AG04449 (cell line): ENCODE measurements at regions of chr7 and their contacts with region 1.

Region 1: DNA sequence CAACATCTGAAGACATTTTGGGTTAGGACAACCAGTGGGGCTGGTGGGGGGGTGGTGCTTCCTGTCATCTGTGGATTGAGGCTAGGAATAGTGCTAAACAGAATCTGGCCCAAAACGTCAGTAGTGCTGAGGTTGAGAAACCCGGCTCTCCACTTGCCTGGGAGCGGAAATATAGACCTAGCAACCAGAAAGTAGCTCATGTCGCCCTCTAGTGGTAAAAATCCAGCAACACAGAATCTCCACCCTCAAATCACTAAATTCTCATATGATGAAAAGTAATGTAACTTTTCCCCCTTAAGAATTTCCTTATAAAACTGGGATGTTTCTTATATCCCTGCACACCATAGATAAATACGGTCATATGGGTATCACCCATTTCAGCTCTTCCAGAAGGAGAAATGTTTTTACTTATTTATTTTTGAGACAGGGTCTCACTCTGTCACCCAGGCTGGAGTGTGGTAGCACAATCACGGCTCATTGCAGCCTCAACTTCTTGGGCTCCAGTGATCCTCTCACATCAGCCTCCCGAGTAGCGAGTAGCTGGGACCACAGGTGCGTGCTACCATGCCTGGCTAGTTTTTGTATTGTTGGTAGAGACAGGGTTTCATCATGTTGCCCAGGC is 34.4 kb downstream of the ZC3HAV1 start:
- DNase-seq: peak; percentile 31
- H3K4me3 ChIP-seq: no peak overlapping the region
- CTCF ChIP-seq: peak; percentile 55

Region 2: DNA sequence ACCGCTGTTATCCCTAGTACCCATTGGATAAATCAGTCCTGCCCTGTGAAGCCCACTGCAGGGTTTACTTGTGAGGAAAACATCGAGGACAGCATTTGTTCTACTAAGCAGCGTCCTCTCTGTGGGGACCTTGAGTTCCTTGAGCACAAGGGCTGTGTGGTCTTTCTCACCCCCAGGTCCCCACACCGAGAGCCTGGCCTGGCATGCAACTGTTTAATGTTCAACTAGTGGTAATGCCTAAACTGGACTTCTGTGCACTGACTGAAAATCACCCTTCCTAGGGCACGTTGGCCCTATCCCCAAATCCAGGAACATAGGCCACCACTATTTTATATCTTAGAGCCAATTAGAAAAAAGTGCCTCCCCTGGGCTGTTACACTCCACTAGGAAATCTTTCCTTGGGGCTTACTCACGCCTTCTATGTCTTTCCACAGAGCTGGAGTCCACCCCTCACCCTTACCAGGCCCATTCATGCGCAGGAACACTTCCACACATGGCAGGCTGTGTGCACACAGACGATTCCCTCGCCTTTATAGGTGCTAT is 279.0 kb before region 1 on chr7:
- CTCF ChIA-PET with region 1: no interaction called
- POLR2A ChIA-PET with region 1: no interaction called
- DNase-seq: no peak
- H3K4me3 ChIP-seq: no peak overlapping the region
- CTCF ChIP-seq: no peak

Region 3: DNA sequence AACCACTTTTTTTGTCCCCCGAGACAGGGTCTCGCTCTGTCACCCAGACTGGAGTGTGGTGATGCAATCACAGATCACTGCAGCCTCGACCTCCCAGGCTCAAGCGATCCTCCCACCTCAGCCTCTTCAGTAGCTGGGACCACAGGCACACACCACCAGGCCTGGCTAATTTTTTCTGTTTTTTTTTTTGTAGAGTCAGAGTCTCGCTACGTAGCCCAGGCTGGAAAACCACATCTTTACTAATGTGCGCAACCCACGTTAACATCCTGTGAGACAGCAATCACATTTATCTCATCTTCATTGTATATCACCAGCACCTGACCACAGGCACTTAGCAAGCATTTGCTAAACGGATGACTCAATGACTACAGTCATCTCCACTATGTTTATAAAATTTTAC is 199.3 kb before region 1 on chr7:
- CTCF ChIA-PET with region 1: interaction called, 15 read pairs
- POLR2A ChIA-PET with region 1: no interaction called
- DNase-seq: peak; percentile 76
- H3K4me3 ChIP-seq: no peak overlapping the region
- CTCF ChIP-seq: no peak

Region 4: GRCh38 chr7:139016931-139017511 is 58.1 kb before region 1 on chr7:
- CTCF ChIA-PET with region 1: interaction called, 40 read pairs
- POLR2A ChIA-PET with region 1: no interaction called
- DNase-seq: no peak
- H3K4me3 ChIP-seq: no peak overlapping the region
- CTCF ChIP-seq: peak; percentile 72

Region 5: DNA sequence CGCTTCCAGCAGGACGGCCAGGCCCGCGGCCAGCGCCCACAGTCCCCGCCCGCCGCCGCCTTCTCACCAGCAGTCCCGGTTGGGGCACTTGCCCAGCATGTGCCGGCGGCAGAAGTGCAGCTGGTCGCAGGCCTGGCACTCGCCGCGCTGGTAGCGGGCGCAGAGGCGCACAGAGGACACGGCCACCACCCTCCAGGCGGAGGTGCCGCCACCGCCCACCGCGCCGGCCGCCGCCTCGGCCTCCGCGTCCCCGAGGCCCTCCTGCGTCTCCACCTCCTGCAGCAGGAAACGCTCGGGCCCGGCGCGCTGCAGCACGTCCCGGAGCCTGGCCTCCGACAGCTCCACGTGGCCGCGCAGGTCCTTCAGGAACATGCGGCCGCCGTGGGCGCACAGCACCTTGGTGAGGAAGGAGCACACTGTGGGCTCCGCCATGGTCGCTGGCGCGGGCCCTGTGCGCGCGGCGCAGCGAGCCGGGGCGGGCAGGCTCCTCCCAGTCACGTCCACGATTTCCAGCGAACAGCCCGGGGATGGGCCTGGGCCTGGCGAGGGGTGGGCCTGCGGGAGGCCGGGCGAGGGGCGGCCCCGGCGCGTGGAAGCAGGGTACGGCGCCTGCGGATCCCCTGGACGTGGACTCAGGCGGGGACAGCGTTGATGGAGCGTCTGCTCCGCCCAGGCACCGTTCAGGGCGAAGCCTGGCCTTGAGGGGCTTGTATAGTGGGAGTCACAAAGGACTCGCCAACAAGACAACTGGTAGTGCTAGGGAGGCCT is 39.4 kb before region 1 on chr7 and contains the start of gene ZC3HAV1L:
- CTCF ChIA-PET with region 1: interaction called, 12 read pairs
- POLR2A ChIA-PET with region 1: no interaction called
- DNase-seq: no peak
- H3K4me3 ChIP-seq: peak within 1 kb of the TSS; percentile 80
- CTCF ChIP-seq: no peak

Region 6: DNA sequence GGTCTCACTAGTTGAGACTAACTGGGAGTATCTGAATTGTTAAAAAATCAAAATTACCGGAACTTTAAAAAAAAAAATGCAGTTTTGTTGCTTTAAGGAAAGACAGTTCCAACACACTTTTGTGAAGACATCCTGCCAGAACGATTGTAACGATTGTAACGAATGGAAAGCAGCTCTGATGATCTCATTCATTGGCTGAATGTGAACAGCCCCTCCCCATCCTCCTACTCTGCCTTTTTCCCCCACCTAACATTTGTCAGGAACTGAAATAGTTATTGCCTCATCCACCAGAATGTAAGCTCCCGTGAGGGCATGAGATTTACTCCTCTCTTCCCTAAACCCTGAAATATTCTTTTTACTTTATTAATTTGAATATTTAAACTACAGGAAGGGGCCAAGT is 16.2 kb before region 1 on chr7:
- CTCF ChIA-PET with region 1: interaction called, 44 read pairs
- POLR2A ChIA-PET with region 1: no interaction called
- DNase-seq: no peak
- H3K4me3 ChIP-seq: no peak overlapping the region
- CTCF ChIP-seq: no peak

Region 7: DNA sequence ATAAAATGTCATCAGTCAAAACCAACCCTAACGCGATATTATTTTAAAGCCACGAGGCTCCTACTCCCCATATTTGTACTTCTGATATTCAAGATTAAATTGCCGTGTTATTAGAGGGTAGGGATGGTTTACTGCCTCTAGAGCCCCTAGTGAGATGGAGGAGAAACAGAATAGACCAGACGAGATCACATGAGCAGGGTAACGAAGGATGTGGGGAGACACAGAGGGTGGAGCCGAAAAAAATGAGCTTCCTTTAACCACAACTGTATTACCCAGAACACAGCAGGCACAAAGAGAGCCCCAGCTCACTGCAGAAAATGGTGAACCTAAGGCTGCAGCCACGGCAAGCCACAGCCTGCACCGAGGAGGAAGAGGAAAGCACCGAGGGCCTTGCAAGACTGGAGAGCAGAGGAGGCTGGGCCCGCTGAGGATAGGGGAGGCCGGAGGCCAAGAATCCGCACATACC is 20.1 kb after region 1 on chr7:
- CTCF ChIA-PET with region 1: interaction called, 19 read pairs
- POLR2A ChIA-PET with region 1: no interaction called
- DNase-seq: no peak
- H3K4me3 ChIP-seq: no peak overlapping the region
- CTCF ChIP-seq: no peak